ENCODE measurements at regions of chr5 and their contacts with region 1.

Region 1: DNA sequence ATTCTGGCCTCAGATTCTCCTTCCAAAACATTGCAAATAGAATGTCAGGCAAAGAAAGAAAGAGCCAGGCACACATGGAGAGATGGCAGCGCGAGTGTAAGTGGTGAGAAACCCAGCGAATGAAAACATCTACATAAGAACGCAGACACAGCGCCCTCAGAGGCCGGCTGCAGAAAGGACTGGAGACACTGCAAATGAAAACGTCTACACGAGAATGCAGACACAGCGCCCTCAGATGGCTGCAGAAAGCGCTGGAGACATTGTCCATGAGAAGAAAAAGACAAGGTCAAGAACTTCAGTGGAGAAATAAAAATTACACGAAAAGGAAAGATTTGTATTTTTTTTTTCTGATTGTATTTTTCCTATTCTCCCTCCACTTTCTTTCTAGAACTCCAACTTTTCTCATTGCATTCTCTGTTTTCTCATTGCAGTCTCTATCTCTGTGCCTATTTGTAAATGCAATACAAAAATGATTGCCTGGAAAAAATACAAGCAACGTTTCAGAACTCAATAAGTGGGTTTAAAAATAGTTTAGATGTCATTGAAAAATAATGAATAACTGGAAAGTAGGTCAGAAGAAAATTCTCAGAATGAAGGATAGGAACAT is 117.9 kb upstream of the LPCAT1 start:
- H3K4me3 ChIP-seq: no peak overlapping the region; the same call in 1 of the 2 replicates
- H3K27ac ChIP-seq: no peak overlapping the region
- H3K4me1 ChIP-seq: no peaks in the 10 kb centered on the region; the same call in 1 of the 2 replicates
- CTCF ChIP-seq: peak; percentile 91

Region 2: GRCh38 chr5:1174122-1174936 is 467.3 kb before region 1 on chr5:
- CTCF ChIA-PET with region 1: interaction called, 62 read pairs
- POLR2A ChIA-PET with region 1: no interaction called
- H3K4me3 ChIP-seq: no peak overlapping the region
- H3K27ac ChIP-seq: no peak overlapping the region
- H3K4me1 ChIP-seq: no peaks in the 10 kb centered on the region; the same call in 1 of the 2 replicates
- CTCF ChIP-seq: peak; percentile 82

Region 3: GRCh38 chr5:1380011-1380817 is 261.4 kb before region 1 on chr5:
- CTCF ChIA-PET with region 1: interaction called, 21 read pairs
- POLR2A ChIA-PET with region 1: no interaction called
- H3K4me3 ChIP-seq: no peak overlapping the region
- H3K27ac ChIP-seq: 0 out of 2 replicates have a peak overlapping the region, but pooled peaks have one; percentile 9
- H3K4me1 ChIP-seq: peaks cover 3% of the 10 kb centered on the region; the same call in 1 of the 2 replicates
- CTCF ChIP-seq: peak; percentile 70

Region 4: GRCh38 chr5:1474183-1474848 is 167.3 kb before region 1 on chr5:
- CTCF ChIA-PET with region 1: interaction called, 20 read pairs
- POLR2A ChIA-PET with region 1: no interaction called
- H3K4me3 ChIP-seq: no peak overlapping the region
- H3K27ac ChIP-seq: no peak overlapping the region
- H3K4me1 ChIP-seq: no peaks in the 10 kb centered on the region
- CTCF ChIP-seq: no peak

Region 5: DNA sequence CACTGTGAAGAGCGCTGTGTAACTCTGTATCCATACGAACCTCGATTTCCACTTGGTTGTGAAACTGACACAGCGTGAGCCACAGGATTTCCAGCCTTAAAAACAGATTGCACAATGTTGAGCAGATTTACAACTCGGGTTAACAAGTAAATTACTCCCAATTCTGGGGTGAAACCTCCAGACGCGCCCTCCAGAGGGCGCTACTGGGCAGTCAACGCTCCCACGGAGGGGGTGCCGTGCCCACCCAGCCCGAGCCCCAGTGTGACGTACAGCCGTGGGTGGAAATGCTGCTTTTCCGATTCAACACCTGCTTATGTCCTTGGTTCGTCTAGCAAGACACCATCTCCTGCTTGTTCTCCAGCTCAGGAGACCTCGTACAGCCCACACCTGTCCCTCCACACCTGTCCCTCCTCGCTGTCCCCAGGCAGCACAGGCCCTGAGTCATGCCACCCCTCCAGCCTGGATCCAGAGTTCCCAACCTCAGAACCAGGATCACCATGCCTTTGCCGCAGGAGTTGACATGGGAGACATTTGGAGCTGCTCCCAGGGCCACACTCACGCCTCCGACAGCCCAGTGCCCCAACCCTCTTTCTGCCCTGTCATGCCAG is 162.0 kb before region 1 on chr5:
- CTCF ChIA-PET with region 1: interaction called, 20 read pairs
- POLR2A ChIA-PET with region 1: no interaction called
- H3K4me3 ChIP-seq: no peak overlapping the region
- H3K27ac ChIP-seq: no peak overlapping the region
- H3K4me1 ChIP-seq: no peaks in the 10 kb centered on the region
- CTCF ChIP-seq: peak; percentile 58

Region 6: GRCh38 chr5:1492757-1493156 is 148.9 kb before region 1 on chr5:
- CTCF ChIA-PET with region 1: interaction called, 13 read pairs
- POLR2A ChIA-PET with region 1: no interaction called
- H3K4me3 ChIP-seq: no peak overlapping the region
- H3K27ac ChIP-seq: no peak overlapping the region
- H3K4me1 ChIP-seq: no peaks in the 10 kb centered on the region
- CTCF ChIP-seq: no peak

Region 7: DNA sequence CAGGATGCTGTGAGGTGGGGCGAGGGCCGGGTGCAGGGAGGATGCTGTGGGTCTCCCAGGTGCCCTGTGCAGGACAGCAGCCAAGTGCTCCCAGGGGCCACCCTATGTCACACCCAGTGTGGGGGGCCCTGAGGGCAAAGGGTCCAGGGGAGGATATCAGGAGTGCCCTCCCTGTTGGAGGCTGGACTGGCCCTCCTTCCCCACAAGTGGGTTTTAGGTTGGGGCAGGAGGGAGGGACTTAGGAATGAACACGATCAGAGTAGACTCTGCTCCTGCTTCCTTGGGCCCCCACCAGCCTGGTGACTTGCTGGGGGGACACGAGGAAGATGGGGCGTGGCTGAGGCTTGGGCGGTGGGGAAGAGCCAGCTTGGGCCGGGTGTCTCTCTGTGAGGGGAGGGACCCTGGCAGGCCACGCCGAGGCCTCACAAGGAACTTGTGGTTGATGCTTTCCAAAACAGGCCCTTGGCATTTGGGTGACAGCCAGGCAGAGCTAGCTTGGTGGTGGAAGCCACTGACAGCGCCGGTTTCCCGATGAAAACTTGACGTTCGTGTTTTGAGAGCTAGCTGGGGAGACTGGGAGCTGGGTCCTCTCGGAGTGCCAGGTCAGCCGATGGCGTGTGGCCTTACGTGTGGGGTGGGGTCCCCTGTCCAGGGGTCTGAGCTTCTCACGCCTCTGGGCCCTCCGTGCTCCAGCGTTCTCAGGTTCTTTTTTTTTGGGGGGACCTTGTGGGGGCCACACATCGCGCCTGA is 11.1 kb after region 1 on chr5:
- CTCF ChIA-PET with region 1: interaction called, 23 read pairs
- POLR2A ChIA-PET with region 1: no interaction called
- H3K4me3 ChIP-seq: no peak overlapping the region
- H3K27ac ChIP-seq: no peak overlapping the region
- H3K4me1 ChIP-seq: no peaks in the 10 kb centered on the region
- CTCF ChIP-seq: no peak

Measured in HEK293 (cell line).